Left cardiac atrium (tissue), 4 donors: ENCODE measurements at regions of chr11 and their contacts with region 1.

Region 1: GRCh38 chr11:61803889-61804647 is 11.4 kb downstream of the FEN1 start:
- DNase-seq: no peak
- ATAC-seq: no peak

Region 2: DNA sequence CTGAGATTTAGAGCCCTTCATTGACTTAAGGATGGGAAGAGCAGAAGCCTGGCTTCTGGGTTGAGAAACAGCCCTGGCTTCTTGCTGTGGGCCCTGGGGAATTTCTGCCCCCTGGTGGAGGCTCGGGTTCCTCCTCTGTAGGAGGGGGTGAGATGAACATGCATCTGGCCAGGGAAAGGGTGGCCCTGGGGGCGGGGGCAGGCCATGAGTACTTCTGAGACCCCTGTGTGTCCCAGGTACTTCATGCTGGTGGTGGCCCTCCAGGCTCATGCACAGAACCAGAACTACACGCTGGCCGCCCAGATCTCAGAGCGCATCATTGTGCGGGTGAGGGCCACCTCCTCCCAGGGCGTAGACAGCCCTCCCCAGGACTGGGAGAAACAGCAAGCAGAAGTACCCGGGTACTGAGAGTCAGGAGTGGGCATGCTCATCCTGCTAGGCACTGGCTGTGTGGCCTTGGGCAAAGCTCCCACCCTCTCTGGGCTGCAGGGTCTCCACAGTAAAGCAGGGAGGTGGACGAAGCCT is 27.5 kb before region 1 on chr11:
- intact Hi-C with region 1: no loop called
- DNase-seq: peak; percentile 57
- ATAC-seq: peak in 1 of 2 donors; percentile 18

Region 3: GRCh38 chr11:61860054-61860903 is 56.2 kb after region 1 on chr11:
- intact Hi-C with region 1: loop called in 1 of 2 experiments (anchors 10 kb)
- DNase-seq: peak; percentile 81
- ATAC-seq: peak; percentile 71 to 79

Region 4: GRCh38 chr11:61994981-61995380 is 190.9 kb after region 1 on chr11:
- intact Hi-C with region 1: no loop called
- DNase-seq: no peak
- ATAC-seq: no peak

Region 5: DNA sequence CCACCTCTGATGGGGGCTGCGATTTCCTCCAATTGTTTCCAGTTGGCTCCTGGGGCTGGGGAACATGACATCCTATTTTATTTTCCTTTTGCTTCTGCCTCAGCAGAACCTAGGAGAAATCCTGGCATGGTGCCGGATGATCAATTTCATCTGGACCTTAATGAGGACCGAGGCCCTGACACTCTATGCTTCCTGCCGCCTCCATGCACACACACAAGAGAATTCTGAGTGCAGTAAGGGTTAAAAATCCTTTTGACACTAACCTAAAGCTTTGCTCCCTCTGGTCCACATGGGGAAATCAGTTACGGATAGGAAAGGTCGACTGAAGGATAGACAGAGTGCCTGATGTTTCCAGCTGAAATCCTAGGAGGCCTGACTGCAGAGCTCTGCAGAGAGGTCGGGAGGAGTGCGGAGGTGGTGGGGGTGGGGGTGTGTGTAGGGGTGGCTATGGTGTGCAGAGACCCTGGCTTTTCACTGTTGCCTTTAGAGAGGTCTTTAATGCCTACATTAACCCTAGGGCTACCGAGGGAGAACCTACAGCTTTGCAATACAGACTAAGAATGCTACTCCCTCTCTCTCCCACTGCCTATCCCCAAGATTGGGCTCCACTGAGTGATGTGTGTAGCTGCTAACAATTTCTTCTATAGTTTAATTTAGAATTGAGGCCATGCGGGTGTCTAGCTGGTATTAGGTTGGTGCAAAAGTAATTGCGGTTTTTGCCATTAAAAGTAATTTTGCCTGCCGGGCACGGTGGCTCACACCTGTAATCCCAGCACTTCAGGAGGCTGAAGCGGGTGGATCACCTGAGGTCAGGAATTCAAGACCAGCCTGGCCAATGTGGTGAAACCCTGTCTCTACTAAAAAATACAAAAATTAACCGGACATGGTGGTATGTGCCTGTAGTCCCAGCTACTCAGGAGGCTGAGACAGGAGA is 266.2 kb after region 1 on chr11:
- intact Hi-C with region 1: loop called in 1 of 2 experiments (anchors 10 kb)
- DNase-seq: no peak
- ATAC-seq: no peak

Region 6: DNA sequence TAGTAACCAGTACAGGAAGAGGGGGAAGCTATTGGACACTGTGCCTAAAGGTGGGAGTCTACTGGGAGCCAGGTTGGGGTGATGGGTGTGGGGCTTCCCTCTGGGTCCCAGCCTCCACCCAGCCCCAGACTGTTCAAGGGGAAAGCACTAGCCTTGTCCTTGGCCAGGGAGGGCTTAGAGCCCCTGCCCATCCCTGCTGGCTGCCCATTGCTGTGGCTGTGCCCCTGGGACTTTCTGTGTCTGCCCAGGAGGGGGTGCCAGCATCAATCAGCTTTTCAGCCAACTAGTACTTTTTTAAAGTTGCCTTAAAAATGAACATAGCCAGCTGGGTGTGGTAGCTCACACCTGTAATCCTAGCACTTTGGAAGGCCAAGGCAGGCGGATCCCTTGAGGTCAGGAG is 339.7 kb after region 1 on chr11:
- intact Hi-C with region 1: no loop called
- DNase-seq: no peak
- ATAC-seq: no peak